Natural killer cell (primary cell): ENCODE measurements at regions of chr2 and their contacts with region 1.

Region 1: GRCh38 chr2:206159346-206160124 is at the starts of genes EEF1B2 and NDUFS1:
- DNase-seq: peak; percentile 95 to 99
- ATAC-seq: peak; percentile 85 to 96 (median 88)
- H3K4me3 ChIP-seq: peak within 1 kb of the TSS; percentile 89
- H3K4me3 Mint-ChIP-seq: peak within 1 kb of the TSS; percentile 99
- H3K27ac ChIP-seq: peak within 1 kb of the TSS; percentile 89
- H3K27ac Mint-ChIP-seq: peak within 1 kb of the TSS; percentile 99 to 100
- H3K4me1 ChIP-seq: peaks cover 18% of the 10 kb centered on the region
- H3K4me1 Mint-ChIP-seq: peaks cover 42 to 48% of the 10 kb centered on the region in 2 donors
- H3K27me3 ChIP-seq: no peaks in the 10 kb centered on the region
- H3K27me3 Mint-ChIP-seq: no peaks in the 10 kb centered on the region
- CTCF ChIP-seq: no peak
- total RNA-seq, gene EEF1B2: 354 to 404 (median 364) TPM
- total RNA-seq, gene NDUFS1: 44.0 to 47.8 (median 45.9) TPM

Region 2: GRCh38 chr2:206085742-206086445 is 73.6 kb before region 1 on chr2 and contains the start of gene INO80D:
- intact Hi-C with region 1: loop called (anchors 1 kb)
- DNase-seq: peak; percentile 76 to 91
- ATAC-seq: peak; percentile 90 to 95 (median 91)
- H3K4me3 ChIP-seq: peak within 1 kb of the TSS; percentile 99
- H3K4me3 Mint-ChIP-seq: peak within 1 kb of the TSS; percentile 99
- H3K27ac ChIP-seq: peak within 1 kb of the TSS; percentile 100
- H3K27ac Mint-ChIP-seq: peak within 1 kb of the TSS; percentile 99
- H3K4me1 ChIP-seq: peaks cover 18% of the 10 kb centered on the region
- H3K4me1 Mint-ChIP-seq: peaks cover 27 to 31% of the 10 kb centered on the region in 2 donors
- H3K27me3 ChIP-seq: no peaks in the 10 kb centered on the region
- H3K27me3 Mint-ChIP-seq: no peaks in the 10 kb centered on the region
- CTCF ChIP-seq: peak; percentile 55
- total RNA-seq, gene INO80D: 59.6 to 64.7 (median 63.9) TPM